Left cardiac atrium (tissue), 4 donors: ENCODE measurements at regions of chr1 and their contacts with region 1.

Region 1: DNA sequence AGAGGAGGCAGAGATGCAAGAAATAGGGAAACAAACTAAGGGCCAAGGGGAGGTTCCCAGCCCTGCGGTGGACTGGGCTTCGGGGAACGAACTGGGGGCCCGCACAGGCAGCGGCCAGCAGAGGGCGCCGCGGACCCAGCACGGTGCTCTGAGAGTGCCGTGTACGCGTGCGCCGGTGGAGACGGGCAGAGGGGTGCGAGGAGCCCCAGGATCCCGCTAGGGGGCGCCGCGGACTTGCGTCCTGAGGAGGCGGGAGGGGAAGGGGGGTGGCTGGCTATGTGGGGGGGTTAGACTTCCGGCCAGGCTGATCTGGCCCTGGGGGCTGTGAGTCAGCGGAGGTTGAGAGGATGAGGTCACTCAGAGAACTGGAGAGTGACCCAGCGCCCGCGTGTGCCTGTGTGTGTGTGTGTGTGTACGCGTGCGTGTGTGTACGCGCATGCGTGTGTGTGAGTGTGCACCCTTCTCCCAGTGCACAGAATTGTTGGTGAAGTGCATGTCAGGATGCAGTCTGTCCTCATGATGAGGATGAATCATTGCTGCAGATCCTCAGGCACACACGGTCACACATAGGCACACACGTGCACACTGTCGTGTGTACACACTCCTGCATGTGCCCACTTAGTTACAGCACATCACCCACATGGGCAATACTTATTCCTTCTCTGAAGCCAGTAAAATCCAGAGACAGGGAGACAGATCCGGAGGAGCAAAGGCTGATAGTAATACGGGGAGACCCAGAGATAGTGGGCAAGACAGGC is 17.0 kb downstream of the NES start:
- DNase-seq: peak; percentile 98
- ATAC-seq: peak; percentile 78 to 87

Region 2: DNA sequence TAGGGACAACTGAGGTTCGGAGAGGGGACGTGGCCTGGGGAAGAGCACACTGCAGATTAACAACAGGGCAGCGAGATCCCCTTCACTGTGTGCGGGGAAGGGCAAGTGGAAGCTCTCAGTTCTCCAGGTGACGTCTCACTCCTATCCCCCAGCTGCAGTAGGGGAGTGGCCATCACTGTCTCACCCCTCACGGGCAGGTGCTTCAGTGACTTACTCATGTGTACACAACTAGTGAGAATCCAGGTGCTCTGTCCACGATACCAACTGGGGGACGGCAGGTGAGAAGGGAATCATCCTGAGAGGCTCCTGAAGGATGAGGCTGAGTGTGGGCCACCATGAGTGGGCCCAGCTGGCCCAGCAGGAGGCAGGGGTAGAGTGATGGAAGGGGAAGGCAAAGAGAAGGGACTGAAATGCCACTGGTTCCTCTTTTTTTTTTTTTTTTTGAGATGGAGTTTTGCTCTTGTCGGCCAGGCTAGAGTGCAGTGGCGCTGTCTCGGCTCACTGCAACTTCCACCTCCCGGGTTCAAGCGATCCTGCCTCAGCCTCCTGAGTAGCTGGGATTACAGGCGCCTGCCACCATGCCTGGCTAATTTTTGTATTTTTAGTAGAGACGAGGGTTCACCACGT is 265.2 kb before region 1 on chr1:
- intact Hi-C with region 1: no loop called
- DNase-seq: no peak
- ATAC-seq: no peak

Region 3: GRCh38 chr1:156625436-156626078 is 34.6 kb before region 1 on chr1:
- intact Hi-C with region 1: loop called (anchors 2 kb)
- DNase-seq: peak; percentile 67
- ATAC-seq: peak; percentile 66 to 68

Region 4: DNA sequence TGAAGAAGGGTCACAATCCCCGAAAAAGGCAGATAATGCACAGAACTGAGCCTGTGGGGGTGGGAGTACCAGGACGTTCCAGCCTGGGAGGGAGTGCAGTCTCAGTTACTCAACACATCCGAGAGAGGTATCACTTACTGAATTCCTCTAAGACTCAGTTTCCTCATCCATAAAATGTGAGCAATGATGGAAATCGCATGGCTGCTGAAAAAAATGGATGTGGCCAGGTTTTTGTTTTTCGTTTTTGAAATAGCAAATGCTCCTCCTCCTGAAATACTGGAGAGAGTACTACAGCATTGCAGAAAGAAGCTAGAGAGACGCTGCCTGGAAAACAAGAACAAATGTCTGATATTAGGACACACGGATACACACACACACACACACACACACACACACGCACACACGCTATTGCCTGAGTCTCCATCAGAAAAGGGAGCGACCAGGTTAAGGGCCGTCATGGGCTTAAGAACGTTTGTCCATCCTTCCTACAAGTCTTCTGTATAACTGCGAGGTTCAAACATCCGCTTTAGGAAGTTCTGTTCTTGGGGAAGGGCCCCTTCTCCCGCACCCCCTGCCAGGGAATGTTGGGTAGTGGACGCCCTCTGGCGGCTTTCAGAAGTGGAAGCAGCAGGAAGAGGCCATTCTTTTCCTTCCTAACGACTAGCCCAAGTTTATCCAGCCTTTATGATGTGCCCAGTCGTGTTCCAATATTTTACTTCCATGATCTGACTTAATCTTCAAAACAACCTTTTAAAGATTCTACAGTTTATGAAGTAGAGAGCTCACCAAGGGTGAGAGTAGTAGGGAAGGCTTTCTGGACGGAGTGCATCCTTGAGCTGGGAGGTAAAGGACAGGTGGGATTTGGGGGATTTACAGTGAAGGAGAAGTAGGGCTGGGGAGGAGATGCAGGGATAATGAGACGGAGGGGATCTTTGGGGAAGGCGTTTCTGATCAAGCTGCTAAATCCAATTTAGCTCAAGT is 17.7 kb after region 1 on chr1:
- intact Hi-C with region 1: loop called (anchors 1 to 2 kb)
- DNase-seq: peak; percentile 80
- ATAC-seq: peak; percentile 66 to 69